Activated CD4-positive, alpha-beta memory T cell treated with anti-CD3 and anti-CD28 coated beads, Interleukin-2, amount 10 ng/mL, durations not matched to agents 7 days and 5 days (primary cell): ENCODE measurements at regions of chr7 and their contacts with region 1.

Region 1: DNA sequence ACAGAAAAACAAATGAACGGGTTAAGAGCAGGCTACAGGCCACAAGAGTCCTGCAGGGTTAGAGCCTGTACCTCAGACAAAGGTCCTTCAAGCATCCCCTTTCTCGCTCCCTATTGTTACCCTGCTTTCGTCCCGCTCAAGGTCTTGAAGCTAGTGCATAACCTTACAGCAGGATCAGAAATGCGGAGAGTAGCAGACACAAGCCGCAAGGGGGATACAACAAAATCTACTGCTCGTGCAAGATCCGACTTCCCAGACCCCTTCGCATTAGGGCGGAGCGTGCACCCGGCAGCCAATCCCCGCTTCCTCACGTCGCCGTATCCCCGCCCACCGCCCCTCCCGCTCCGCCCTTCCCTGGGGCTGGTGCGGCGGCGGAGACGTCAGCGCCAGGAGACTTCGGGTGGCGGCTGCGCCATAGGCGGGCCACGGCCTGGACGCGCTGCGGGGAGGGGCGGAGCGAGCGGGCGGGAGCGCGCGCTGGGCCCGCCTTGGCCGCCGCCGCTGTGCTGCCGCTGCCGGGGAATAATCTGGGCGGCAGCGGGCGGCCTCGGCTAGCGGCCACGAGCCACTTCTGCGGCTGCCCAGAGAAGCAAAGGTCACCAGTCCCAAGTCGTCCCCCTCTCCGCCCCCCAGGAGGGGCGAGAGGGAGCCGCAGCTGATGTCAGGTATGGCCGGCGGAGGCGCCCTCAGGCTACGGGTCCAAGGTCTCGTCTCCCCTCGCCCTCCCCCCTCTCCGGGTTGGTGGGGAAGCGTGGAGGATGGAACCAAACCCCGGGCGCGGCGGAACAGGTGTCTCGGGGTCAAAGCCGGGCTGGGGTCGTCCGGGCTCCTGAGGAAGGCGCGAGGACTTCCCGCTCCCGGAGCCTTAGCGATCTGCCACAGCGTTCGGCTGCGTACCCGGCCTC is at the start of gene C1GALT1:
- DNase-seq: peak; percentile 97
- H3K4me3 Mint-ChIP-seq: peak within 1 kb of the TSS; percentile 93
- H3K27ac Mint-ChIP-seq: peak within 1 kb of the TSS; percentile 100
- H3K4me1 Mint-ChIP-seq: peaks cover 25% of the 10 kb centered on the region
- H3K27me3 Mint-ChIP-seq: no peaks in the 10 kb centered on the region
- total RNA-seq, gene C1GALT1: 63.4 to 64.1 TPM

Region 2: DNA sequence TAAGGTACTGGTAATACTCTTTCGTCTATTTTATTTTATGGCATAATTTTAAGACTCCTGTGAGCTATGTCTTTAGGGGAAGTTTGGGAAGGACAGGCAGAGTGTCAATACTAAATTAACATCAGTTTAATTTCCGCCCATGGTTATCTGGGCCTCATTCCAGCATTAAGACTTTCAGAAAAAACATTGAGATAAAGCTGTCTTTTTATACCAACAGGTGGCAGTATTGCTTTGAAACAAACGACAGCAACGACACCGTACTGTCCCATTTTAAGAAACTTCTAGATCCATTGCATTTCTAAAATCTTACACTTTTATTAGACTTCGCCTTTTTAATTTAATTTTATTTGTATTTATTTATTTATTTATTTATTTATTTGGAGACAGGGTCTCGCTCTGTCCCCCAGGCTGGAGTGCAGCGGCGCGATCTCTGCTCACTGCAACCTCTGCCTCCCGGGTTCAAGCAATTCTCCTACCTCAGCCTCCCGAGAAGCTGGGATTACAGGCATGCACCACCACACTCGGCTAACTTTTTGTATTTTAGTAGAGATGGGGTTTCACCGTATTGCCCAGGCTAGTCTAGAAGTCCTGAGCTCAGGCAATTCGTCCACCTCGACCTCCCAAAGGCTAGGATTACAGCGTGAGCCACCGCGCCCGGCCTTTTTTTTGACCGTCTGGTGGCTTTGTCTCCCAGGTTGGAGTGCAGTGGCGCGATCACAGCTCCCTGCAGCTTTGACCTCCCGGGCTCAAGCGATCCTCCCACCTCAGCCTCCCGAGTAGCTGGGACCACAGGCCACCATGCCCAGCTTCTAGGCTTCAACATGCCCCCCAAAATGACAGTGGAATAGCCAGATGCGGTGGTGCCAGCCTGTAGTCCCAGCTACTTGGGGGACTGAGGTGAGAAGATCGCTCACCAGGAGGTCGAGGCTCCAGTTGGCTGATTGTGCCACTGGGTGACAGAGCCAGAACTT is 78.8 kb before region 1 on chr7:
- CTCF ChIA-PET with region 1: interaction called, 53 read pairs
- POLR2A ChIA-PET with region 1: interaction called, 26 read pairs
- DNase-seq: no peak
- H3K4me3 Mint-ChIP-seq: no peak overlapping the region
- H3K27ac Mint-ChIP-seq: no peak overlapping the region
- H3K4me1 Mint-ChIP-seq: peaks cover 20% of the 10 kb centered on the region
- H3K27me3 Mint-ChIP-seq: no peaks in the 10 kb centered on the region

Region 3: DNA sequence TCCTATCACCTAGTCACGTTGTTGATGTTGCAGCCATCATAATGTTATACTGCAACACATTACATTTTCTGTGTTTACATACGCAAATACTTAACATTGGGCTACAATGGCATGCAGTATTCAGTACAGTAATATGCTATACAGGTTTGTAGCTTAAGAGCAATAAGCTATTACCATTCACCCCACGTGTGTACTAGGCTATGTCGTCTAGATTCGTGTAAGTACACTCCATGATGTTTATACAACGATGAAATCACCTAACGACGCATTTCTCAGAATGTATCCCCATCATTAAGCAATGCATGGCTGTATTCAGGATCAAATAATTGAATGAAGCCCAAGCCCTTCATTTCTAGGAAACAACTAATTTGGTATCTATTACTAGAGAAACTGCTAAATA is 43.5 kb before region 1 on chr7:
- CTCF ChIA-PET with region 1: no interaction called
- POLR2A ChIA-PET with region 1: no interaction called
- DNase-seq: no peak
- H3K4me3 Mint-ChIP-seq: no peak overlapping the region
- H3K27ac Mint-ChIP-seq: no peak overlapping the region
- H3K4me1 Mint-ChIP-seq: peaks cover 3% of the 10 kb centered on the region
- H3K27me3 Mint-ChIP-seq: no peaks in the 10 kb centered on the region

Region 4: DNA sequence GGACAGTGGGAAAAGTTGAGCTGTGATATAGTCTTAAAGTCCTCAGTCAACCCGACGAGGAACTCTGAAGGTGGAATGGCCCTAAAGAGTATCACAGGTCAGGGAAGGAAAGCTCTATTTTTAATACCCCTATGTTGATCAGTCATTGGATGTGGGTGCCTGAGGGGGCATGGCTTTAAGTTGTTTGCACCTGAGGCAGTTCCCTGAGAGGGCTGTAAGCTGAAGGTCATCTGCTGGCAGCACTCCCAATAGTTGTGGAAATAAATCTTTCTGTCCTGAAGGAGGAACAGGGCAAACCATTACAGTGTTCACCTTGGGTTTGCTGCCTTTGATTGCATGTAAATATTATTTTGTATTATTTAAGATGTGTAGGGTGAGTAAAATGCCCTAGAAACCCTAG is 17.8 kb before region 1 on chr7:
- CTCF ChIA-PET with region 1: interaction called, 6 read pairs
- POLR2A ChIA-PET with region 1: interaction called, 131 read pairs
- DNase-seq: no peak
- H3K4me3 Mint-ChIP-seq: no peak overlapping the region
- H3K27ac Mint-ChIP-seq: no peak overlapping the region
- H3K4me1 Mint-ChIP-seq: peaks cover 22% of the 10 kb centered on the region
- H3K27me3 Mint-ChIP-seq: no peaks in the 10 kb centered on the region

Region 5: GRCh38 chr7:7249814-7250213 is 67.4 kb after region 1 on chr7:
- CTCF ChIA-PET with region 1: no interaction called
- POLR2A ChIA-PET with region 1: interaction called, 11 read pairs
- DNase-seq: no peak
- H3K4me3 Mint-ChIP-seq: no peak overlapping the region
- H3K27ac Mint-ChIP-seq: no peak overlapping the region
- H3K4me1 Mint-ChIP-seq: peaks cover 7% of the 10 kb centered on the region
- H3K27me3 Mint-ChIP-seq: no peaks in the 10 kb centered on the region

Region 6: GRCh38 chr7:7566651-7567611 is 384.5 kb after region 1 on chr7 and contains the start of gene MIOS:
- CTCF ChIA-PET with region 1: no interaction called
- POLR2A ChIA-PET with region 1: interaction called, 12 read pairs
- DNase-seq: peak; percentile 83
- H3K4me3 Mint-ChIP-seq: peak within 1 kb of the TSS; percentile 67
- H3K27ac Mint-ChIP-seq: peak within 1 kb of the TSS; percentile 36
- H3K4me1 Mint-ChIP-seq: peaks cover 34% of the 10 kb centered on the region
- H3K27me3 Mint-ChIP-seq: no peaks in the 10 kb centered on the region
- total RNA-seq, gene MIOS: 22.8 to 24.6 TPM